Activated T-helper 1 cell treated with anti-CD3 and anti-CD28 coated beads, Interleukin-12 subunit alpha, Interleukin-12 subunit beta, Interleukin-2, Interleukin-4 antibody, amounts not matched to agents 30 ng/mL and 10 ng/mL and 1 ng/mL, durations not matched to agents 14 hours and 24 hours and 36 hours (primary cell): ENCODE measurements at regions of chr22 and their contacts with region 1.

Region 1: DNA sequence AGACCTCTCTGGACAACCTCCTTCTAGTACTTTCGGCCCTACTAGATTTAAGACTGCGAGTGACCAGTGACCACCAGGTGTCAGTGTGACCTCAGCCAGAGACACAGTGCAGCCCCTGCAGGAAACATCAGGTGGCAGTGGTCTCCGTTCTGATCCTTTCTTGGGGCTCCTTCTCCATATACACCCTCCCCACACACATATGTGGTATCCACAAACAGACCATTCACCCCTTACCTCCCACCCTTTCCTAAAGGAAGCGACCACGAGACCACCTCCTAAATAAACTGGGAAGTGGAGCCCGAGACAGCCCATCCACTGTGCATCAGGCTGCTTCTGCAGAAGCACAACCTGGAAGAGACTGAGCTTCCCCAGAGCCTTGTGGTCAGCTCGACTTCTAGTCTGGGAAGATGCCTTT is 38.5 kb upstream of the CYP2D6 start:
- DNase-seq: peak; percentile 47
- H3K4me3 Mint-ChIP-seq: no peak overlapping the region
- H3K27ac Mint-ChIP-seq: peak overlapping the region; percentile 34
- H3K4me1 Mint-ChIP-seq: peaks cover 23% of the 10 kb centered on the region
- H3K27me3 Mint-ChIP-seq: no peaks in the 10 kb centered on the region

Region 2: GRCh38 chr22:42156121-42156520 is 12.9 kb before region 1 on chr22:
- intact Hi-C with region 1: no loop called
- DNase-seq: no peak
- H3K4me3 Mint-ChIP-seq: no peak overlapping the region
- H3K27ac Mint-ChIP-seq: no peak overlapping the region
- H3K4me1 Mint-ChIP-seq: no peaks in the 10 kb centered on the region
- H3K27me3 Mint-ChIP-seq: no peaks in the 10 kb centered on the region

Region 3: DNA sequence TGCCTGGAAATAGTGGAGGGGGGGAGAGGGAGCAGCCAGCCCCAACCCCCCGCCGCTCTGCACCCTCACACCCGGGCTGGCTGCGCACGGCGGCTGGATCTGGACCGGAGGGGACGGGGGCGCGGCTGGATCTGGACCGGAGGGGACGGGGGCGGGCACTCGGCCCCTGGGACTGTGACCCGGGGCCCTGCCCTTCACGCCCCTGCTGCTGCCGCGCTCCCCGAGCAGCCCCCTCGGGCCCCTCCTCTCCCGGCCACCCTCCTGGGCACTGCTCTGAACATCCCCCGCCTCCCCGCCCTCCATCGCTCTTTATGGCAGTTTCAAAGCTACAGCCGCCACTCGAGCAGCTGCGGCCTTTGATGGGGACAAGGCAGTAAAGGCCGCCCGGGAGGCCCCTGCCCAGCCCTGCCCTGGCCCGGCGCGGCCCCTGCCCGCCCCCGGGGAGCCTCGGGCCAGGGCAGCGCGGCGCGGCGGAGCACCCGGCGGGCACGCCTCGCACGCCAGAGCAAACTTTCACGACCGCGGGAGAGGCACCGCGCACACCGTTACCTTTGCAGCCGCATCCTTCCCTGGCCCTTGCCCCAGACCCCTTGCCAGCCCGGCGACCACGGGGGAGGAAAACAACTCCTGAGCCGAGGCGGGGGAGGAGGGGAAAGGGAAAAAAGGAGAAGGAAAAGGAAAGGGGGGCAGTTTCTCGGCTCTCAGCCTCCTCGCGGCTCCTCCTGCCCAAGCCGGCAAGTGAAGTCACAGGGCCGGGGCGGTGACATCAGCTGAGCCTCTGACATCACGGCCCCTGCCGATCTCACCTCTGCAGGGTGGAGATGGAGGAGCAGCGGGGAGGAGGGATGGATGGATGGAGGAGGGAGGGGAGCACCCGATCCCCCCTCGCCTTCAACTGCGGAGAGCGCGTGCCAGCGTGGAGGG is 114.5 kb after region 1 on chr22:
- intact Hi-C with region 1: no loop called
- DNase-seq: peak; percentile 21
- H3K4me3 Mint-ChIP-seq: peak overlapping the region; percentile 59
- H3K27ac Mint-ChIP-seq: no peak overlapping the region
- H3K4me1 Mint-ChIP-seq: peaks cover 30% of the 10 kb centered on the region
- H3K27me3 Mint-ChIP-seq: peaks cover 15% of the 10 kb centered on the region

Region 4: GRCh38 chr22:42313804-42314581 is 144.9 kb after region 1 on chr22:
- intact Hi-C with region 1: loop called (anchors 2 kb)
- DNase-seq: peak; percentile 28
- H3K4me3 Mint-ChIP-seq: no peak overlapping the region
- H3K27ac Mint-ChIP-seq: no peak overlapping the region
- H3K4me1 Mint-ChIP-seq: peaks cover 21% of the 10 kb centered on the region
- H3K27me3 Mint-ChIP-seq: no peaks in the 10 kb centered on the region

Region 5: DNA sequence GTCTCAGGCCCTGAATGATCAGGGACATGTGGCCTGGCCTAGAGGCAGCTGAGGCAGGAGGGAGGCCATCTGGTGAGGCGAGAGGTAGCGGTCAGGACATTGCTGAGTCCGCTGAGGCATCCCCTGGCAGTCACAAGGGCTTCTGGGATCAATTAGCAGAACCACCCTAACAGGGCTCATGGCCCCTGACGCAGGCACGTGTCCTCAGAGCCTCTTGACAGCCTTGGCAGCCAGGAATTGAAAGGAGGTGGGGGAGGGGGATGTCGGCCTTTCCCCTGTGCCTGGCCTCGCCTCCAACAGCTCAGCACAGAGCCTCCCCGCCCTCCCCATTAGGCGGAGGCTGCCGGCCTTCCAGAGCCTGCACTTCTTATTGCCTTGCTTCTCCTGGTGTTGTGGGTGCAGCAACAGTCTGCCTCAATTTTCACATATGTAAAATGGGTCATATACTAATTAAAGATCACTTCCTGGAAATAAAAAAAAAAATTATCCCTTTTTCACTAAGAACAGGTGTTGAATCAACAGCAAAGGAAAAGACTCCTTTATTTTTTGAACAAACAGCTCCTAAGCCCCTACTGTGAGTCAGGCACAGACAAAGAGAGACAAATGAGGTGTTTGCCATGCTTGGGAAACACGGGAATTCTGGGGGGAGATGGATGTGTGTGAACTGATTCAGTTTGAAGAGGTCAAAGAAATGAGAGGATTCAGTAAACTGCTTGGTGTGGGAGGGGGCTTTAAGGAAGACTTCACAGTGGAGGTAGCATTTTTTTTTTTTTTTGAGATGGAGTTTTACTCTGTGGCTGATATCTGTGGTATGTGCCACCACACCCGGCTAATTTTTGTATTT is 207.9 kb after region 1 on chr22:
- intact Hi-C with region 1: no loop called
- DNase-seq: no peak
- H3K4me3 Mint-ChIP-seq: no peak overlapping the region
- H3K27ac Mint-ChIP-seq: no peak overlapping the region
- H3K4me1 Mint-ChIP-seq: peaks cover 5% of the 10 kb centered on the region
- H3K27me3 Mint-ChIP-seq: peaks cover 6% of the 10 kb centered on the region